ENCODE measurements at regions of chr6 and their contacts with region 1.

Region 1: DNA sequence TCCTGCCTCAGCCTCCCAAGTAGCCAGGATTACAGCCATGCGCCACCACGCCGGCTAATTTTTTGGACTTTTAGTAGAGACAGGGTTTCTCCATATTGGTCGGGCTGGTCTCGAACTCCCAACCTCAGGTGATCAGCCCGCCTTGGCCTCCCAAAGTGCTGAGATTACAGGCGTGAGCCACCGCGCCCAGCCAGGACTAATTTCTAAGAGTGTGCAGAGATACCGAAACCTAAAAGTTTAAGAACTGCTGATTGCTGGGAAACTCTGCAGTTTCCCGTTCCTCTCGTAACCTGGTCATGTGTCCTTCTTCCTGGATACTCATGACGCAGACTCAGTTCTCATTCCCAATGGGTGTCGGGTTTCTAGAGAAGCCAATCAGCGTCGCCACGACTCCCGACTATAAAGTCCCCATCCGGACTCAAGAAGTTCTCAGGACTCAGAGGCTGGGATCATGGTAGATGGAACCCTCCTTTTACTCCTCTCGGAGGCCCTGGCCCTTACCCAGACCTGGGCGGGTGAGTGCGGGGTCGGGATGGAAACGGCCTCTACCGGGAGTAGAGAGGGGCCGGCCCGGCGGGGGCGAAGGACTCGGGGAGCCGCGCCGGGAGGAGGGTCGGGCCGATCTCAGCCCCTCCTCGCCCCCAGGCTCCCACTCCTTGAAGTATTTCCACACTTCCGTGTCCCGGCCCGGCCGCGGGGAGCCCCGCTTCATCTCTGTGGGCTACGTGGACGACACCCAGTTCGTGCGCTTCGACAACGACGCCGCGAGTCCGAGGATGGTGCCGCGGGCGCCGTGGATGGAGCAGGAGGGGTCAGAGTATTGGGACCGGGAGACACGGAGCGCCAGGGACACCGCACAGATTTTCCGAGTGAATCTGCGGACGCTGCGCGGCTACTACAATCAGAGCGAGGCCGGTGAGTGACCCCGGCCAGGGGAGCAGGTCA is at the start of gene HLA-E:
- DNase-seq: peak; percentile 93
- H3K4me3 Mint-ChIP-seq: peak within 1 kb of the TSS; percentile 100
- H3K27ac Mint-ChIP-seq: peak within 1 kb of the TSS; percentile 98
- H3K4me1 Mint-ChIP-seq: peaks cover 50% of the 10 kb centered on the region
- H3K27me3 Mint-ChIP-seq: peaks cover 15% of the 10 kb centered on the region
- total RNA-seq, gene HLA-E: 757 to 767 TPM

Region 2: GRCh38 chr6:30282522-30282921 is 206.8 kb before region 1 on chr6:
- CTCF ChIA-PET with region 1: no interaction called
- POLR2A ChIA-PET with region 1: no interaction called
- DNase-seq: no peak
- H3K4me3 Mint-ChIP-seq: no peak overlapping the region
- H3K27ac Mint-ChIP-seq: no peak overlapping the region
- H3K4me1 Mint-ChIP-seq: no peaks in the 10 kb centered on the region
- H3K27me3 Mint-ChIP-seq: peaks cover 4% of the 10 kb centered on the region

Region 3: GRCh38 chr6:30311101-30311500 is 178.3 kb before region 1 on chr6:
- CTCF ChIA-PET with region 1: no interaction called
- POLR2A ChIA-PET with region 1: no interaction called
- DNase-seq: no peak
- H3K4me3 Mint-ChIP-seq: no peak overlapping the region
- H3K27ac Mint-ChIP-seq: no peak overlapping the region
- H3K4me1 Mint-ChIP-seq: peaks cover 2% of the 10 kb centered on the region
- H3K27me3 Mint-ChIP-seq: no peaks in the 10 kb centered on the region

Region 4: GRCh38 chr6:30508890-30509736 is 19.8 kb after region 1 on chr6:
- CTCF ChIA-PET with region 1: interaction called, 28 read pairs
- POLR2A ChIA-PET with region 1: interaction called, 290 read pairs
- DNase-seq: no peak
- H3K4me3 Mint-ChIP-seq: peak overlapping the region; percentile 50
- H3K27ac Mint-ChIP-seq: peak overlapping the region; percentile 89
- H3K4me1 Mint-ChIP-seq: peaks cover 46% of the 10 kb centered on the region
- H3K27me3 Mint-ChIP-seq: no peaks in the 10 kb centered on the region

Region 5: DNA sequence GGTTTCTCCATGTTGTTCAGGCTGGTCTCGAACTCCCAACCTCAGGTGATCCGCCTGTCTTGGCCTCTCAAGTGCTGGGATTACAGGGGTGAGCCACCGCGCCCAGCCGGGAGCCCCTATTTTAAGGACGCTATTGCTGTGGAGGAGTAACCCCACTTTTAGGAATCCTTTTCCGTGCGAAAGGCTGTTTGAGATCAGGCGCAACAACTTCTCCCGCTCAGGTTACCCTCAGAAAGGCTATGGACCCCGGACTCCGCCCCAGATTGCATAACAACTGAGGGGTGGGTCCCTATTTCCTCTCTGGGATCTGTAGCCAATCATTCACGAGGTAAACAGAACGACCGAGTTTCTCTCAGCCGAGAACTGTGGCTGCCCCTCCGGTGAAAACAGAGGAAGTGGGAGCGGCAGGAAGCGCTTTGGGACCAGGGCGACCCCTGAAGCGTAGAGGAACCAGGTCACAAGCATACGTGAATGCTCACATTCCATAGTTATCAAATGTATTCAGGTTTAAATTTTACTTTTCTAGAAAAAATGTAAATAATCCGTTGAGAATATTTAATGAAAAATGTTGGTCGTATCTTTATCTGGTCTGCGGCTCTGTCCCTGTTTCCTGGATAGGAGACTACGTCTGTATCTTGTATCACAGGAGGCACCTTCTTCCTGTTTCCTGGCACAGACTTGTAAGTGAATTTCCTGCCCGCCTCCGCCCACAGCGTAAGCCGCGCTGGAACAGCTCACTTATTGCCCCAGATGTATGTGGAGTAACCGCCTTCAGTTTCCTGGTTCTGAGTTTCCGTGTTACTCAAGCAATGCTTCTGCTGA is 26.8 kb after region 1 on chr6:
- CTCF ChIA-PET with region 1: interaction called, 28 read pairs
- POLR2A ChIA-PET with region 1: interaction called, 290 read pairs
- DNase-seq: peak; percentile 94
- H3K4me3 Mint-ChIP-seq: peak overlapping the region; percentile 66
- H3K27ac Mint-ChIP-seq: peak overlapping the region; percentile 96
- H3K4me1 Mint-ChIP-seq: peaks cover 43% of the 10 kb centered on the region
- H3K27me3 Mint-ChIP-seq: no peaks in the 10 kb centered on the region

Region 6: DNA sequence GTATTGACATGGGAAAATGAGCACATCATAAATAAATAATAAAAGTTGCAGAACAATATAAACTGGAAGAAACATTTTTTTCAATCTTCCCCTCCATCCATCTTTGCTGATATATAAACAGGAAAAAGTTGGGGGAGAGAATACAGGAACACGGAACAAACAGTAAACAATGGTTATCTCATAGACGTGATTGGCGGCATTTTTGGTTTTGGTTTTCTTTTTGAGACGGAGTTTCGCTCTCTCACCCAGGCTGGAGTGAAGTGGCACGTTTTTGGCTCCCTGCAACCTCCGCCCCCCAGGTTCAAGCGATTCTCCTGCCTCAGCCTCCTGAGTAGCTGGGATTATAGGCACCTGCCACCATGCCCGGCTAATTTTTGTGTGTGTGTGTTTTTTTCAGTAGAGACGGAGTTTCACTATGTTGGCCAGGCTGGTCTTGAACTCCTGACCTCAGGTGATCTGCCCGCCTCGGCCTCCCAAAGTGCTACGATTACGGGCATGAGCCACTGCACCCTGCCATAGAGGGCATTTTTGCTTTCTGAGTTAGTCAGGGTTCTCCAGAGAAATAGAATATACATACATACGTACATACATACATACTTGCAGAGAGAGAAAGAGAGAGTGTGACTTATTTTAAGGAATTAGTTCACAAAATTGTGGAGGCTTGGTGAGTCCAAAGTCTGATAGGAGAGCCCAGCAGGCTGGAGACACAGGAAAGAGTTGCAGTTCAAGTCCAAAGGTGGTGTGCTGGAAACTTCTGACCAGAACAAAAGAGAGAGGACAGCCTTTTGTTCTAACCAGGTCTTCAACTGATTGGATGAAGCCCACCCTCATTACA is 44.3 kb after region 1 on chr6:
- CTCF ChIA-PET with region 1: interaction called, 267 read pairs
- POLR2A ChIA-PET with region 1: interaction called, 154 read pairs
- DNase-seq: peak; percentile 42
- H3K4me3 Mint-ChIP-seq: peak overlapping the region; percentile 80
- H3K27ac Mint-ChIP-seq: peak overlapping the region; percentile 85
- H3K4me1 Mint-ChIP-seq: peaks cover 41% of the 10 kb centered on the region
- H3K27me3 Mint-ChIP-seq: no peaks in the 10 kb centered on the region

Region 7: GRCh38 chr6:30556066-30556905 is 66.9 kb after region 1 on chr6 and contains the start of gene GNL1:
- CTCF ChIA-PET with region 1: interaction called, 3 read pairs
- POLR2A ChIA-PET with region 1: interaction called, 41 read pairs
- DNase-seq: peak; percentile 98
- H3K4me3 Mint-ChIP-seq: peak within 1 kb of the TSS; percentile 95
- H3K27ac Mint-ChIP-seq: peak within 1 kb of the TSS; percentile 99
- H3K4me1 Mint-ChIP-seq: peaks cover 45% of the 10 kb centered on the region
- H3K27me3 Mint-ChIP-seq: no peaks in the 10 kb centered on the region
- total RNA-seq, gene GNL1: 62.1 to 70.8 TPM

Region 8: DNA sequence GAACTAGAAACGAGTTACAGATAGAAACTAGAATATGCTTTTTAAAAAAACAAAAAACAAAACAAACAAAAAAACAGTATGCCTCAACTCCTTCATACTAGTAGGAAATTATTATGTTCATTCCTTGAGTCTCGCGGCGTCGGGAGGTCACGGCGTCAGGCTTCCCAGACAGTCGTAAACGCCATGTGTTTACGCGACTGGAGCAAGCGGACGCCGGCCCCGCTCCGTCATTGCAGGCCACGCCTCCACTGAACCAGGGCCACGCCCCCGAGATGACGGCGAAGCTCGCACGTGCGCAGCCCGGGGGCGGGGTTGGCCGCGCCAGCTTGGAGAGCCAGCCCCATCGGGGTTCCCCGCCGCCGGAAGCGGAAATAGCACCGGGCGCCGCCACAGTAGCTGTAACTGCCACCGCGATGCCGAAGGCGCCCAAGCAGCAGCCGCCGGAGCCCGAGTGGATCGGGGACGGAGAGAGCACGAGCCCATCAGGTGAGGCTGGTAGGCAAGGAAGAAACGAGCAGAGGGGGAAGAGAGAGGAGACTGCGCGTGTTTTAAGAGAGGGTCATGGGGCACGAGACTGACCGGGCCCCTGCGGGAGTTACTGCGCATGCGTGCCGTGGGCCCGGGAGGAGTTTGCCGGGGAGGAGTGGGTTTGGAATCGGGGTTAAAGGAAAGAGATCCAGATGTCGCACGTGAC is 81.9 kb after region 1 on chr6 and contains the start of gene ABCF1:
- CTCF ChIA-PET with region 1: interaction called, 9 read pairs
- POLR2A ChIA-PET with region 1: interaction called, 13 read pairs
- DNase-seq: peak; percentile 99
- H3K4me3 Mint-ChIP-seq: peak within 1 kb of the TSS; percentile 97
- H3K27ac Mint-ChIP-seq: peak within 1 kb of the TSS; percentile 97
- H3K4me1 Mint-ChIP-seq: peaks cover 63% of the 10 kb centered on the region
- H3K27me3 Mint-ChIP-seq: no peaks in the 10 kb centered on the region
- total RNA-seq, gene ABCF1: 64.3 to 65.2 TPM

Measured in activated CD4-positive, alpha-beta memory T cell treated with anti-CD3 and anti-CD28 coated beads, Interleukin-2, amount 10 ng/mL, durations not matched to agents 7 days and 5 days (primary cell).